WTC11 (cell line): ENCODE measurements at regions of chr5 and their contacts with region 1.

Region 1: DNA sequence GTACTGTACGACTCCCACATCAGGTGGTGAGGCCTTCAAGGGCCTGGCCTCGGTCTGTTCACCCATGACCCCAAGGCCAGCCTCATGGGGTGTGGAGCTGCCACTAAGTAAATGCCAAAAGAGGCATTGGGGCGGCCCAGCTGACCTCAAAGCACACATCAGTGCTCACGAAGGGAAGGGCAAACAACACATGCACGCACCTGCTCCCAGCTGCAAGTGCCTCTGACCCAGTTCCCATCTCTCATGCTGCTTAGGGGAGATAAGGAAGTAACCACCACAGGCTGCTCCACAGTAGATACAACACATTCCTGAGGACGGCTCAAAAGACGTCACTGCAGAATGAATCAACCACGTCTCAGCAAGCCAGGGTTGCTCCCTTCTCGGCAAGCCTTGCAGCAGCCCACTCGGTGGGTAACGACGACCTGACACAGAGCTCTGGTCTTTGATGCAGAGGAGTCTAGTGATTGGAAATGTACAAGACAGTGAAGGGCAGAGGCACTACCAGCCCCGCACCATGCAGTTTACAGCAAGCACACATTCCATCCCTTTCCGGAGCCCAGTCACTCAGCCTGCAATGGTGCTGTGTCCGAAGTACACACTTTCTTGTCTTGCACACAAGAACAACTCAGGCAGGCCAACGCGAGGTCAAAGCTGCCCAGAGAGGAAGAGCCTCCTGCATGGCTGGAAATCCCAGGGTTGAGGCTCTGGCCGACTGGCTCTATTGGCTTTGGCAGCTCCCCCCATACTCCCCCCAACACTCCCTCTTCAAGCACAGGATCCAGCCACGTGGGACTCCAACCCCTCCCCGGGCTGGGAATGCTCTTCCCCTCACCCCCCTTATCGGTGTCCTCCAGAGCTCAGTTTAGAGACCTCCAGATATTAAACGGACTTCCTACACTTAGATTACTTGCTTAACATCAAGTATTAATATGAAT is 31.8 kb downstream of the FABP6 start:
- DNase-seq: no peak
- ATAC-seq: peak; percentile 11
- H3K4me3 Mint-ChIP-seq: no peak overlapping the region
- H3K27ac Mint-ChIP-seq: peak overlapping the region; percentile 72
- H3K4me1 Mint-ChIP-seq: peaks cover 50% of the 10 kb centered on the region
- H3K27me3 Mint-ChIP-seq: no peaks in the 10 kb centered on the region; the same call in 1 of the 2 replicates
- CTCF ChIP-seq: no peak

Region 2: DNA sequence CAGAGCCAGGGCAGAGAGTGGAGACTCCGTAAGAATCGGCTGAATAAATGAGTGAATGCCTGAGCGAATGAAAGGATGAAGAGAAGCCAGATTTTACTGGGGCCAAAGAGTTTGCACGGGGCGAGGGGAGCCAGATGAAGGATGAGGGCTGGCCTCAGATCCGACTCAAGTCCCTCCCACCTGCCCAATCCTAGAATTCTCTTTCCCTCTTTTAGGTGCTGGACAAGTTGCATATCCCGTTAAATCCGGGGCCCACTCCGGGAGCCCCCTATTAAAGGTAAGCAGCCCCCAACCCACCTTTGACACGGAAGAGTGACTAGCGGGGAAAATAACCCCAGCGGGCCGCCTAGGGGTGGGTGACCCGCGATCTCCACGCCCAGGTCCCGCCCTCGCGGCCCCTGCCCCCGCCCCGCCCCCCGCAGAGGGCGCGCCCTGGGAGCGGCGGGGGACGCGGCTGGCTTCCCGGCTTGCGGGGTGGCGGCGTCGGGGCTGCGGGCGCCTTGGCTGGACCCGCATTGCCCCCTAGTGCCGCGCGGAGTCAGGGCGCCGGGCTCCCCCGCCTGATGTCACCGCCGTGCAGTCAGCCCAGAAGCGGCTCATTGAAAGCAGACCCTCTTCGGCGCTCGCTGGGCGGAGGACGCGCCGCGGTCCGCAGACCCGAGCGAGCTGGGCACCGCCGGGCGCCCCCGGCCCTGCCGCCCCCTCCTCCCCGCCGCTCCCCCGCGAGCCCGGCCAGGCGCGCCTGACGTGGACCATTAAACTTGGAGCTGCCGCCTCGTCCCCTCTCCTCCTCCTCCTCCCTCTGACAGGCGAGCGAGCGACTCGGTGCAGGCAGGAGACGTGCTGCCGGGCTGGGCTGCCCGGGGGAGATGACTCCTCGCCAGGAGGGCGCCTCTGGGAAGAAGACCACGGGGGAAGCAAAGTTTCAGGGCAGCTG is 345.0 kb before region 1 on chr5 and contains the start of gene ADRA1B:
- CTCF ChIA-PET with region 1: no interaction called
- POLR2A ChIA-PET with region 1: no interaction called
- DNase-seq: peak; percentile 80
- ATAC-seq: peak; percentile 91
- H3K4me3 Mint-ChIP-seq: peak within 1 kb of the TSS; percentile 78
- H3K27ac Mint-ChIP-seq: no peak within 1 kb of the TSS
- H3K4me1 Mint-ChIP-seq: peaks cover 9% of the 10 kb centered on the region
- H3K27me3 Mint-ChIP-seq: peaks cover 47% of the 10 kb centered on the region
- CTCF ChIP-seq: peak; percentile 37; the same call in 1 of the 2 replicates
- total RNA-seq, gene ADRA1B: 0.11 to 0.16 TPM in 2 of 3 replicates, not detected in the other

Region 3: DNA sequence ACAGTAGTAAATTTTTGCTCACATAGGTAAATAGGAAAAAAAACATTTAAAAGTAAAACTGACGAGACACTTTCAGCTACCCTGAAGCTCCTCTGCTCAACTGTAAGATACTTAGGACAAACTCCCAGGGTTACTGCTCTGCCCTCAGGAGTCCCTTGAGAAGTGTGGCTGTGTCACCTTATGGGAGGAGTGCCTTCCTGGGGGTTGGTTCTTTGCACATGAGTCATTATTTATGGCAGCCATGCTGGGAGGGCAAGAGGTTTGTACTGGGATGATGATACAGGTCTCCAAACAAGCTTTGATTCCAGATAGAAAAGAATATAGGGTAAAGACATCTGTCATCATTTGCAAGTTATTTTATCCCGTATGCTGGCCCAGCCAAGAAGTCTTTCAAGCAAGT is 206.3 kb before region 1 on chr5:
- CTCF ChIA-PET with region 1: no interaction called
- POLR2A ChIA-PET with region 1: no interaction called
- DNase-seq: no peak
- ATAC-seq: no peak
- H3K4me3 Mint-ChIP-seq: no peak overlapping the region
- H3K27ac Mint-ChIP-seq: no peak overlapping the region
- H3K4me1 Mint-ChIP-seq: no peaks in the 10 kb centered on the region; the same call in 1 of the 2 replicates
- H3K27me3 Mint-ChIP-seq: no peaks in the 10 kb centered on the region
- CTCF ChIP-seq: no peak

Region 4: DNA sequence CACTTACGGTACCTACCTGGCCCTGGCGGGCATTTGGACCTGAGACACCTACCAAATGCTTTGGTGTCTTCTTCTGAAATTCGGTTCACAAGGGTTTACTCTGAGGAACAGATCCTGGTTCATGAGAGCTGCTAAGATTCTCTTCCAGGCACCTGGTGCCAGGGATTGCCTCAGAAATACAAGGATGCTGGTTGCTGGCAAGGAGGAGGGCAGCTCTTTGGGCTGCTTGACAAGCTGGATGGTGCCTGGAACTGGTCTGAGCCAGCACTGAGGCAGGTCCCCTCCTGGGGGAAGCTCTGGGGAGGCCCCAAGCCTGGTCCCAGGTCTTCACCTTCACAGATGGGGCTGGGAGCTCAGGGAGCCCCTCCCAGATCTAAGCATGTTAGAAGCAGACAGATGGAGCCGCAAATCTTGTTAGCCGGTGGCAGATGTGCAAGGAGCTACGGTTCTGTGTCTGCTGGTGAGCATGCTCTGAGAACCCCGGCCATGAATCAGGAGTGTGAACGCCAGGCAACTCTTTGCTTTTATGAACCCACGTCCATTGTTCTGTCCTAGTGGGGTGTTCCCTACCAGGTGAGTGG is 15.6 kb before region 1 on chr5:
- CTCF ChIA-PET with region 1: interaction called, 16 read pairs
- POLR2A ChIA-PET with region 1: interaction called, 5 read pairs
- DNase-seq: no peak
- ATAC-seq: 0 out of 2 replicates have a peak, but pooled peaks have one; percentile 8
- H3K4me3 Mint-ChIP-seq: no peak overlapping the region
- H3K27ac Mint-ChIP-seq: no peak overlapping the region
- H3K4me1 Mint-ChIP-seq: peaks cover 11% of the 10 kb centered on the region
- H3K27me3 Mint-ChIP-seq: no peaks in the 10 kb centered on the region
- CTCF ChIP-seq: no peak

Region 5: GRCh38 chr5:160287378-160288051 is 26.4 kb after region 1 on chr5:
- CTCF ChIA-PET with region 1: interaction called, 35 read pairs
- POLR2A ChIA-PET with region 1: interaction called, 5 read pairs
- DNase-seq: peak; percentile 86
- ATAC-seq: peak; percentile 92
- H3K4me3 Mint-ChIP-seq: peak overlapping the region; percentile 60
- H3K27ac Mint-ChIP-seq: peak overlapping the region; percentile 99
- H3K4me1 Mint-ChIP-seq: peaks cover 59% of the 10 kb centered on the region
- H3K27me3 Mint-ChIP-seq: no peaks in the 10 kb centered on the region
- CTCF ChIP-seq: no peak

Region 6: DNA sequence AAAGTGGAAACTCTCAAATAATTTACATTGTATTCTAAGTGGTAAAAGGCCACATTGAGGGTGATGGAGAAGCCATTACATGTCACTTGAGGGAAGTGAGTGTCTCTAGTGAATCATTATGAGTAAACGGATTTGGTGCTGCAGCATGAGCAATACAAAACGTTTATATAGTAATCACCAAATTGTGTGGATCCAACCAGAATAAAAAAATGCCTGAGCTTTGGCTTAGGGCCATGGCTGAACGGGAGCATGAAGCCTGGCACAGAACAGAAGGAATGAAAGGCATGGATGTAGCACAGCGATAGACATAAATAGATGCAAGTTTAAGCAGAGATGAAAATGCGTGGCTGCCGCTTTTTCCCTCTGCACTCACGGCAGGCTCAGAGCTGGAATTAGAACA is 218.8 kb after region 1 on chr5:
- CTCF ChIA-PET with region 1: no interaction called
- POLR2A ChIA-PET with region 1: no interaction called
- DNase-seq: no peak
- ATAC-seq: no peak
- H3K4me3 Mint-ChIP-seq: no peak overlapping the region
- H3K27ac Mint-ChIP-seq: no peak overlapping the region
- H3K4me1 Mint-ChIP-seq: peaks cover 66% of the 10 kb centered on the region
- H3K27me3 Mint-ChIP-seq: no peaks in the 10 kb centered on the region
- CTCF ChIP-seq: no peak